Naive thymus-derived CD4-positive, alpha-beta T cell (primary cell): ENCODE measurements at regions of chr17 and their contacts with region 1.

Region 1: DNA sequence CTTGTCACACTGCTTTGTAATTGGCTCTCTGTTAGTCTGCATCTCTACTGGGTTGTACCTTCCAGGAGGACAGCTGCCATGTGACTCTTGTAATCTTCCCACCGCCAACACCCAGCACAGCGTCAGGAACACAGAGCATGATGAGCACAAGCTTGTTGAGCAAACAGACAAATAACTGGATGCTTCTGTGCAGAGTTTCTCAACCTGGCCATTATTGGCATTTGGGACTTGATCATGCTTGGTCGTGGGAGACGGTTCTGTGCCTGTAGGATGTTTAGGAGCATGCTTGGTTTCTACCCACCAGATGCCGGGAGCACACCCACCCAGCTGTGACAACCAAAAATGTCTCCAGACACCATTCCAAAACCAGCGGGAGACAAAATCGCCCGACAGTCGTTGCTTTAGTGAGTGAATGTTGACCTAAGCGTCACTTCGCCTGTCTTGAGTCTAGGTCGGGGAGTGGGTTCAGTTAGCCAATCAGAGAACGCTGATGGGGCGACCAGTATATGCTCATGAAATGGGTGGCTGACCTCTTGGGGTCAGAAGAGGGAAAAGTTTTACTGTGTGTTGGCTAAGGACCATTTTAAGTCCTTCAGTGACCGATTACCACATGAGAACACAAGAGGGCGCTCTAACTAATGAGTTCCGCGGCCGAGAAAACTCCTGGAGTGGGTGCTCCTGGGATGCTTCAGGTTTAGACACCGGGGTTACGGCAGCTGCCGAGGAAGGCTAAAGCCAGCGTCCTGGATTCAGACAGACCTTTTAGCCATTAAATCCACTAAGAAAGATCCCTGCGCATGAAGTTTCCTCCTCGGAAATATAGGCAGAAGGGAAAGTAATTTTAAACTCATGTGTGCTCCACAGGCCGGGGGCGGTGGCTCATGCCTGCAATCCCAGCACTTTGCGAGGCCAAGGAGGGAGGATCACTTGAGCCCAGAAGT is 57.8 kb upstream of the TEX2 start:
- DNase-seq: peak in 8 of 9 donors; percentile 32 to 67 (median 54)
- ATAC-seq: peak; percentile 85
- H3K4me3 ChIP-seq: no peak overlapping the region
- H3K4me3 Mint-ChIP-seq: peak overlapping the region in 6 of 10 donors; percentile 20 to 62 (median 44)
- H3K27ac ChIP-seq: no peak overlapping the region
- H3K27ac Mint-ChIP-seq: peak overlapping the region in 8 of 9 donors; percentile 60 to 95 (median 82)
- H3K4me1 ChIP-seq: peaks cover 0 to 7% of the 10 kb centered on the region in 2 donors
- H3K4me1 Mint-ChIP-seq: peaks cover 2 to 35% (median 22%) of the 10 kb centered on the region in 7 donors
- H3K27me3 ChIP-seq: no peaks in the 10 kb centered on the region
- H3K27me3 Mint-ChIP-seq: peaks cover 0 to 9% (median 0%) of the 10 kb centered on the region in 5 donors

Region 2: GRCh38 chr17:63998050-63998720 is 322.7 kb before region 1 on chr17 and contains the start of gene PRR29:
- CTCF ChIA-PET with region 1: no interaction called
- POLR2A ChIA-PET with region 1: no interaction called
- intact Hi-C with region 1: no loop called
- DNase-seq: peak; percentile 65 to 76 (median 71)
- ATAC-seq: peak; percentile 78
- H3K4me3 ChIP-seq: peak within 1 kb of the TSS; percentile 81
- H3K4me3 Mint-ChIP-seq: peak within 1 kb of the TSS; percentile 79 to 96 (median 90)
- H3K27ac ChIP-seq: peak within 1 kb of the TSS; percentile 53
- H3K27ac Mint-ChIP-seq: peak within 1 kb of the TSS; percentile 64 to 86 (median 82)
- H3K4me1 ChIP-seq: peaks cover 20 to 32% of the 10 kb centered on the region in 2 donors
- H3K4me1 Mint-ChIP-seq: peaks cover 30 to 51% (median 44%) of the 10 kb centered on the region in 7 donors
- H3K27me3 ChIP-seq: no peaks in the 10 kb centered on the region
- H3K27me3 Mint-ChIP-seq: peaks cover 0 to 17% (median 0%) of the 10 kb centered on the region in 5 donors
- total RNA-seq, gene PRR29: 0.29 to 2.8 (median 0.40) TPM in 3 of 5 experiments, not detected in the others

Region 3: GRCh38 chr17:64281962-64282727 is 38.7 kb before region 1 on chr17:
- CTCF ChIA-PET with region 1: no interaction called
- POLR2A ChIA-PET with region 1: no interaction called
- intact Hi-C with region 1: no loop called
- DNase-seq: peak in 8 of 9 donors; percentile 31 to 61 (median 54)
- ATAC-seq: peak; percentile 83
- H3K4me3 ChIP-seq: no peak overlapping the region
- H3K4me3 Mint-ChIP-seq: no peak overlapping the region
- H3K27ac ChIP-seq: no peak overlapping the region
- H3K27ac Mint-ChIP-seq: peak overlapping the region in 1 of 9 donors; percentile 20
- H3K4me1 ChIP-seq: peaks cover 0 to 5% of the 10 kb centered on the region in 2 donors
- H3K4me1 Mint-ChIP-seq: peaks cover 0 to 7% (median 0%) of the 10 kb centered on the region in 7 donors
- H3K27me3 ChIP-seq: no peaks in the 10 kb centered on the region
- H3K27me3 Mint-ChIP-seq: peaks cover 0 to 8% (median 0%) of the 10 kb centered on the region in 5 donors

Region 4: GRCh38 chr17:64348666-64349065 is 27.8 kb after region 1 on chr17:
- CTCF ChIA-PET with region 1: interaction called, 9 read pairs
- POLR2A ChIA-PET with region 1: interaction called, 5 read pairs
- intact Hi-C with region 1: loop called in 1 of 2 experiments (anchors 1 kb)
- DNase-seq: no peak
- ATAC-seq: no peak
- H3K4me3 ChIP-seq: no peak overlapping the region
- H3K4me3 Mint-ChIP-seq: peak overlapping the region in 6 of 10 donors; percentile 21 to 86 (median 73)
- H3K27ac ChIP-seq: peak overlapping the region; percentile 62
- H3K27ac Mint-ChIP-seq: peak overlapping the region in 8 of 9 donors; percentile 90 to 99 (median 95)
- H3K4me1 ChIP-seq: peaks cover 7 to 36% of the 10 kb centered on the region in 2 donors
- H3K4me1 Mint-ChIP-seq: peaks cover 19 to 58% (median 36%) of the 10 kb centered on the region in 7 donors
- H3K27me3 ChIP-seq: no peaks in the 10 kb centered on the region
- H3K27me3 Mint-ChIP-seq: peaks cover 0 to 2% (median 0%) of the 10 kb centered on the region in 5 donors

Region 5: DNA sequence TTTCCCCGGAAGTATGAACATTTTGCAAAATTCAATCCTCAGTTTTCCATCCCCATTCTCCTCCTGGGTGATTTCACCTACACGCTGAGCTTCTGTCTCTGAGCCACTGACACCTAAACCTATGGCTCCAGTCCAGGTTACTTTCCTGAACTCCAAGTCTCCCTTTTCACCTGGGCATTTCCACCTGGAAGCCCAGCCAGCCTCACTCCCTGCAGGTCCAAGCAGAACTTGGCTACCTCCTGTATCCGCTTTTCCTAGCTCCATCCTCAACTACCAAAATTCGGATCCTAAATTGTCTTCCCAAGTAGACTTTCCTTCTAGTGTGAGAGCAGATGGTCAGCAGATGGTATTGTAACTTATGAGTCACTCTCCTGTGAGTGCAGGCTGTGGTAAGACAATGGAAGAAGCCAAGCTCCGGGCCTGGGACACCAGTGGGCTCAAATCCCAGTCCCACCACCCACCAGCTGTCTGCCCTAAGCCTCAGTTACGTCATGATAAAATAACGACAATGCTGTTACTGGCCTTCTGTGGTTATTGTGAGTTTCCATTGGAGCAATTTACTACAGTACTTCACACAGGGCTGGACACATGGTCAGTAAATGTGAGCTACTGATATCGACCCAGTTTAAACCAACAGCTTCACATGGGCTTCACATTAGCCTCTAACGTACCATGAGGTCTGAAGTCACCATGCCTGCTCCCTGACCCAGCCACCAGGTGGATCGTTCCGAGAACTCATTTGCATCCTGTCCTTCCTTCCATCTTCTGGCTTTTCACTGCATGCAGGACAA is 36.5 kb after region 1 on chr17:
- CTCF ChIA-PET with region 1: interaction called, 9 read pairs
- POLR2A ChIA-PET with region 1: interaction called, 3 read pairs
- intact Hi-C with region 1: loop called in 1 of 2 experiments (anchors 5 kb)
- DNase-seq: no peak
- ATAC-seq: no peak
- H3K4me3 ChIP-seq: no peak overlapping the region
- H3K4me3 Mint-ChIP-seq: no peak overlapping the region
- H3K27ac ChIP-seq: no peak overlapping the region
- H3K27ac Mint-ChIP-seq: peak overlapping the region in 8 of 9 donors; percentile 38 to 89 (median 58)
- H3K4me1 ChIP-seq: no peaks in the 10 kb centered on the region
- H3K4me1 Mint-ChIP-seq: peaks cover 10 to 32% (median 26%) of the 10 kb centered on the region in 7 donors
- H3K27me3 ChIP-seq: no peaks in the 10 kb centered on the region
- H3K27me3 Mint-ChIP-seq: peaks cover 0 to 2% (median 0%) of the 10 kb centered on the region in 5 donors

Region 6: GRCh38 chr17:64491034-64491859 is 170.4 kb after region 1 on chr17:
- CTCF ChIA-PET with region 1: interaction called, 7 read pairs
- POLR2A ChIA-PET with region 1: interaction called, 4 read pairs
- intact Hi-C with region 1: loop called (anchors 2 to 5 kb)
- DNase-seq: peak in 7 of 9 donors; percentile 35 to 56 (median 44)
- ATAC-seq: peak; percentile 82
- H3K4me3 ChIP-seq: no peak overlapping the region
- H3K4me3 Mint-ChIP-seq: peak overlapping the region in 1 of 10 donors; percentile 14
- H3K27ac ChIP-seq: no peak overlapping the region
- H3K27ac Mint-ChIP-seq: no peak overlapping the region
- H3K4me1 ChIP-seq: peaks cover 12 to 15% of the 10 kb centered on the region in 2 donors
- H3K4me1 Mint-ChIP-seq: peaks cover 19 to 40% (median 28%) of the 10 kb centered on the region in 7 donors
- H3K27me3 ChIP-seq: no peaks in the 10 kb centered on the region
- H3K27me3 Mint-ChIP-seq: no peaks in the 10 kb centered on the region